Endothelial cell of umbilical vein (primary cell): ENCODE measurements at regions of chr1 and their contacts with region 1.

Region 1: GRCh38 chr1:68321084-68321685 is 88.9 kb upstream of the WLS start:
- DNase-seq: peak; percentile 70
- H3K4me3 ChIP-seq: no peak overlapping the region
- H3K27ac ChIP-seq: no peak overlapping the region
- H3K4me1 ChIP-seq: no peaks in the 10 kb centered on the region
- H3K27me3 ChIP-seq: no peaks in the 10 kb centered on the region
- CTCF ChIP-seq: peak; percentile 72 to 88
- POLR2A ChIP-seq: no peak

Region 2: DNA sequence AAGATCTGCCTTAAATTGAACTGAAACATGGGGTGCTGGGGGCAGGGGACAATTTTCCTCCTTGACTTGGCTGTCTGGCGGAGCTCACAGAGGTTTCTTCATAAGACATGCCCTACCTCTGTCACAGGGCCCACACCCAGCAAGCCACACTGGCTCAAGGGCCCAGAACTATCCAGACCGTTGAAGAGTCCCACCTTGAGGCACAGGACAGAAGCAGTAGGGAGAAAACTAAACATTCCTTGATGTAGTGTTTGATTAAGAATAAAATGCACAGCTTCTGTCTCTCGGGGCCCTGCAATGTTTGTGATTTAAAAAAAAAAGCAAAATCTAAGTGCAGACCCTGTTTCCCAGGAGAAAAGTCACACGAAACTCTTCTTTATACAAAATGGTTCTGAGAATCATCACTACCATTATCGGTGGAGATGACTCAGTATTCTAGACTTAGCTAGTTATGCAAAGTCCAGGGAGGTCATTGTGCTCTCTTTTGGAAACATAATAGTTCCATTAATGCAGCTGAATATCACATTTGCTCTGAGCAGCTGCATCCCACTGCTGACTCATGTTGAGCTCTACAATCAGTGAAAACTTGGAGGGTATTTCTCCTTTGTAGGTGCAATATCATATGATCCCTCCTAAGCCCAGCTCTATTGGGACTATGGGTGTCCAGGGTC is 217.2 kb before region 1 on chr1:
- CTCF ChIA-PET with region 1: no interaction called
- POLR2A ChIA-PET with region 1: no interaction called
- dilution Hi-C with region 1: no loop called
- intact Hi-C with region 1: no loop called
- DNase-seq: peak; percentile 71
- H3K4me3 ChIP-seq: no peak overlapping the region
- H3K27ac ChIP-seq: no peak overlapping the region
- H3K4me1 ChIP-seq: peaks cover 7% of the 10 kb centered on the region
- H3K27me3 ChIP-seq: no peaks in the 10 kb centered on the region
- CTCF ChIP-seq: no peak
- POLR2A ChIP-seq: no peak

Region 3: GRCh38 chr1:68331117-68331865 is 10.1 kb after region 1 on chr1:
- CTCF ChIA-PET with region 1: interaction called, 18 read pairs
- POLR2A ChIA-PET with region 1: no interaction called
- dilution Hi-C with region 1: no loop called
- intact Hi-C with region 1: no loop called
- DNase-seq: peak; percentile 87
- H3K4me3 ChIP-seq: no peak overlapping the region
- H3K27ac ChIP-seq: peak overlapping the region; percentile 30
- H3K4me1 ChIP-seq: peaks cover 29% of the 10 kb centered on the region
- H3K27me3 ChIP-seq: no peaks in the 10 kb centered on the region
- CTCF ChIP-seq: no peak
- POLR2A ChIP-seq: peak; percentile 26

Region 4: DNA sequence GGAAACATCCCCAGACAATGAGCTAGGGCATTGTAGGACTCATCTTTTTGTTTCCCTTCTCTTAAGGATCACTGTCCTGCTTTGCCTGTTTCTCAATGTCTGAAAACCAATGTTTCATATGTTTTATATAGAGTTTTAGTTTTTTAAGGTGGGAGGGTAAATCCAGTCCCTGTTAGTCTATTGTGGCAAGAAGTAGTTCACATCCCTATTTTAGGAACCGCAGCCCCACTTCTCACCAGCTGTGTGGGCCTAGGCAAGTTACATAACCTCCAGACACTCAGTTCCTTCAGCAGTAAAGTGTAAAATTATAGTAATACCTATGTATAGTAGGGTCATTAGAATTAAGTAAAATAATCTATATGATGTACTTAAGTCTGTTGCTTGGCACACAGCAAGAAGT is 16.9 kb after region 1 on chr1:
- CTCF ChIA-PET with region 1: interaction called, 18 read pairs
- POLR2A ChIA-PET with region 1: no interaction called
- dilution Hi-C with region 1: no loop called
- intact Hi-C with region 1: loop called (anchors 1 kb)
- DNase-seq: no peak
- H3K4me3 ChIP-seq: no peak overlapping the region
- H3K27ac ChIP-seq: no peak overlapping the region
- H3K4me1 ChIP-seq: no peaks in the 10 kb centered on the region
- H3K27me3 ChIP-seq: no peaks in the 10 kb centered on the region
- CTCF ChIP-seq: no peak
- POLR2A ChIP-seq: no peak